ENCODE measurements at regions of chr22 and their contacts with region 1.

Region 1: DNA sequence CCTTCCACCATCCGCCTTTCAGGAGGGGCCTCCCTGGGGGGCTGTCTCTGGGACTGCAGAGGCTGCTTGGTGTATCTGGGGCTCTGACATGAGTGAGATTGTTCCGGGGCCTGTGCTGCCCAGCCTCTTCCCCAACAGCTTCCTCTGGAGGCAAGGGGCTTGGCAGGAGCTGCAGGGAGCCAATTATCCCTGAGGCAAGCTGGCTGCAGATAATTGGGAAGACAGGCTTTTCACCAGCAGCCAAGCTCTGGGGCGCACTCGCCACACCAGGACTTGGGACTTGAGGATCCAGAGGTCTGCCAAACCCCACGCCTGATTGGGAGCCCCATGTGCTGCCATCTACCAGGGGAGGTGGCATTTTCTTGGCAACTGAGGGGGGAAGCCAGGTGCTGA is 15.6 kb upstream of the RTN4R start:
- DNase-seq: no peak
- ATAC-seq: no peak
- H3K4me3 ChIP-seq: no peak overlapping the region
- H3K27ac ChIP-seq: no peak overlapping the region
- H3K4me1 ChIP-seq: no peaks in the 10 kb centered on the region
- H3K27me3 ChIP-seq: no peaks in the 10 kb centered on the region

Region 2: GRCh38 chr22:20156611-20157429 is 126.8 kb before region 1 on chr22:
- intact Hi-C with region 1: loop called (anchors 1 kb)
- DNase-seq: peak; percentile 89 to 95
- ATAC-seq: peak; percentile 89
- H3K4me3 ChIP-seq: no peak overlapping the region
- H3K27ac ChIP-seq: no peak overlapping the region
- H3K4me1 ChIP-seq: no peaks in the 10 kb centered on the region
- H3K27me3 ChIP-seq: no peaks in the 10 kb centered on the region